ENCODE measurements at regions of chr13 and their contacts with region 1.

Region 1: DNA sequence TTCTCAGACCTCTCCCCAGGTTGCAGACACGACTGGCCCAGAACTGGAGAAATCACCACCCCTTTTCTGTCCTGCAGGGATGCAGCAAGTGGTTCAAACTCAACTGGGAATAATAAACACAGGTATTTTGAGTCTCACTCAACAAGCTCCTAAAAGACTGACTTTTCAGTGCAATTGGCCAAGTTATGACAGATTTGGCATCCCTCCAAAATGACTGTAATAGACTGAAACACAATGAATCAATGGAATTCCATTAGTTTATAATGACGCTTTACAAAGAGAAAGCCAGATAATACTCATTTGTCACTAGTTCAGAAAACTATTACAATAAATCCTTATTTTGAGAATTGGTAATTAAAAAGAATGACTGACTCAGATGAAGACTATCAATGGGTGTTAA is 38.1 kb downstream of the MIPEP start:
- DNase-seq: no peak
- H3K4me3 ChIP-seq: no peak overlapping the region
- H3K27ac ChIP-seq: no peak overlapping the region
- H3K4me1 ChIP-seq: peaks cover 0 to 17% of the 10 kb centered on the region in 2 experiments; a peak in 2 of 4 replicates
- H3K27me3 ChIP-seq: no peaks in the 10 kb centered on the region
- CTCF ChIP-seq: no peak
- EP300 ChIP-seq: no peak
- RAD21 ChIP-seq: no peak

Region 2: DNA sequence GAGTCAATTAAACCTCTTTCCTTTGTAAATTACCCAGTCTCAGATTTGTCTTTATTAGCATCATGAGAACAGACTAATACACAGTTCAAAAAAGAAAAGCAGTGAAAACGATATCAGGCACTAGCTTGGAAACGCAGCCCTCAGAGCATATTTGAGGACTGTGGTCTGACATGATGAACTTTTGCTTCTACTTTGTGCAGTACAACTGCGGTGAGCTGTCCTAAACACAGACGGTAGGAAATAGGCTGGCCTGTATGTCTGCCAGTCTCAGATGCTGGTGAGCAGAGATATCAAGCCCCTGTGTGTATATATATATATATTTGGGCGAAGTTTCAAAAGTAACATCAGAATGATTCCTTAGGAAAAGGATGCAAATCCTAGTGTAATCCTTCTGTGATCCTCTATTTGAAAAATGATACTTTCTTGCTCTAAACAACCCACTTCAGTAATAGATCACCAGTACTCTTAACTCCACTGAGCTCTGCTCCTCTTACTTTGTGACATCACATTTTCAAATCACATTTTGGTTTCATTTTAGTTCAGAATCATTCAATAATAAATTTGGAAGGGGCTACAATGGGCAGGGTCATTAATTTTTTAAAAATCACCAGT is 206.5 kb before region 1 on chr13:
- CTCF ChIA-PET with region 1: no interaction called
- POLR2A ChIA-PET with region 1: no interaction called
- DNase-seq: no peak
- H3K4me3 ChIP-seq: no peak overlapping the region
- H3K27ac ChIP-seq: no peak overlapping the region
- H3K4me1 ChIP-seq: 0 out of 4 replicates have a peak, but pooled peaks cover 0 to 2% of the 10 kb centered on the region in 2 experiments
- H3K27me3 ChIP-seq: no peaks in the 10 kb centered on the region
- CTCF ChIP-seq: no peak
- EP300 ChIP-seq: no peak
- RAD21 ChIP-seq: no peak

Region 3: DNA sequence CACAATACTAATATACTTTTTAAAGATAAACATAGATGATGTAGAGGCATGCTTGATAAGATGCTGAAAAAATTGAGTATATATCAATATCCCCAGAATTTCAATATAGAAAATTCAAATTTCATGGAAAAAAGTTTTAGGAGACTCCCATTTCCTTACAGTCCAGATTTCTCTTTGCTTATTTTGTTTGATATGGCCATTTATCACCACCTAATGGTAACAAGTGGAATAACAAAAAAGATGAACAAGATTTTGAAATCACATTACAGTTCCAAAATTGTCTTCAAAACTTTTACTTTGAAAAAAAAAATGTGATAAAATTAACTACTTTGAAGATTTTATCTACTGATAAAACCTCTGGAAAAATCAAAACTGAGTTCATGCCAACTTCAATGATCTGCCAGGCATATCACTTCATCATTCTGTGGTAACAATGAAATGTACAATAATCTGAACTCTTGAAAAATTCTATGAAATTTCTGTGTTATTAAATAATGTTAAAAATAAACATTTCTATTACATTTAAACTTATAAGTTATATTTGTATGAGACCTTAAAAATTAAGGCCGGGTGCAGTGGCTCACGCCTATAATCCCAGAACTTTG is 20.6 kb after region 1 on chr13:
- CTCF ChIA-PET with region 1: interaction called, 10 read pairs
- POLR2A ChIA-PET with region 1: no interaction called
- DNase-seq: peak; percentile 46
- H3K4me3 ChIP-seq: no peak overlapping the region
- H3K27ac ChIP-seq: 0 out of 4 replicates have a peak overlapping the region, but pooled peaks of 1 of the 2 experiments have one; percentile 11
- H3K4me1 ChIP-seq: peaks cover 2 to 6% of the 10 kb centered on the region in 2 experiments; a peak in 1 of 4 replicates
- H3K27me3 ChIP-seq: no peaks in the 10 kb centered on the region
- CTCF ChIP-seq: peak; percentile 70
- EP300 ChIP-seq: no peak
- RAD21 ChIP-seq: peak; percentile 84

Measured in SK-N-SH (cell line).